Caco-2 (cell line): ENCODE measurements at regions of chr14 and their contacts with region 1.

Region 1: GRCh38 chr14:22375321-22375930 is 213.6 kb downstream of the DAD1 start:
- DNase-seq: peak in 1 of 2 experiments; percentile 60
- H3K4me3 ChIP-seq: no peak overlapping the region
- H3K4me3 Mint-ChIP-seq: no peak overlapping the region
- H3K27ac Mint-ChIP-seq: no peak overlapping the region
- H3K4me1 ChIP-seq: peaks cover 42% of the 10 kb centered on the region
- H3K4me1 Mint-ChIP-seq: peaks cover 23% of the 10 kb centered on the region
- H3K27me3 ChIP-seq: no peaks in the 10 kb centered on the region
- H3K27me3 Mint-ChIP-seq: no peaks in the 10 kb centered on the region
- CTCF ChIP-seq: peak; percentile 53 to 65

Region 2: GRCh38 chr14:22163051-22163450 is 212.4 kb before region 1 on chr14:
- CTCF ChIA-PET with region 1: interaction called, 4 read pairs
- POLR2A ChIA-PET with region 1: no interaction called
- intact Hi-C with region 1: loop called (anchors 5 kb)
- DNase-seq: no peak
- H3K4me3 ChIP-seq: no peak overlapping the region
- H3K4me3 Mint-ChIP-seq: no peak overlapping the region
- H3K27ac Mint-ChIP-seq: no peak overlapping the region
- H3K4me1 ChIP-seq: peaks cover 8% of the 10 kb centered on the region; the same call in 1 of the 2 replicates
- H3K4me1 Mint-ChIP-seq: no peaks in the 10 kb centered on the region
- H3K27me3 ChIP-seq: no peaks in the 10 kb centered on the region
- H3K27me3 Mint-ChIP-seq: no peaks in the 10 kb centered on the region
- CTCF ChIP-seq: peak; percentile 21 to 35

Region 3: GRCh38 chr14:22276913-22277816 is 98.3 kb before region 1 on chr14:
- CTCF ChIA-PET with region 1: interaction called, 5 read pairs
- POLR2A ChIA-PET with region 1: no interaction called
- intact Hi-C with region 1: loop called (anchors 1 kb)
- DNase-seq: peak in 1 of 2 experiments; percentile 37
- H3K4me3 ChIP-seq: no peak overlapping the region
- H3K4me3 Mint-ChIP-seq: no peak overlapping the region
- H3K27ac Mint-ChIP-seq: no peak overlapping the region
- H3K4me1 ChIP-seq: peaks cover under 1% of the 10 kb centered on the region; the same call in 1 of the 2 replicates
- H3K4me1 Mint-ChIP-seq: peaks cover under 1% of the 10 kb centered on the region
- H3K27me3 ChIP-seq: no peaks in the 10 kb centered on the region
- H3K27me3 Mint-ChIP-seq: no peaks in the 10 kb centered on the region
- CTCF ChIP-seq: peak; percentile 60 to 66

Region 4: GRCh38 chr14:22319526-22320361 is 55.7 kb before region 1 on chr14:
- CTCF ChIA-PET with region 1: interaction called, 37 read pairs
- POLR2A ChIA-PET with region 1: no interaction called
- intact Hi-C with region 1: loop called (anchors 1 kb)
- DNase-seq: peak; percentile 67 to 72
- H3K4me3 ChIP-seq: no peak overlapping the region
- H3K4me3 Mint-ChIP-seq: no peak overlapping the region
- H3K27ac Mint-ChIP-seq: peak overlapping the region; percentile 34
- H3K4me1 ChIP-seq: peaks cover 14% of the 10 kb centered on the region; the same call in 1 of the 2 replicates
- H3K4me1 Mint-ChIP-seq: peaks cover 22% of the 10 kb centered on the region
- H3K27me3 ChIP-seq: no peaks in the 10 kb centered on the region
- H3K27me3 Mint-ChIP-seq: no peaks in the 10 kb centered on the region
- CTCF ChIP-seq: peak; percentile 61 to 69

Region 5: GRCh38 chr14:22358726-22359125 is 16.7 kb before region 1 on chr14:
- CTCF ChIA-PET with region 1: no interaction called
- POLR2A ChIA-PET with region 1: no interaction called
- intact Hi-C with region 1: no loop called
- DNase-seq: no peak
- H3K4me3 ChIP-seq: no peak overlapping the region
- H3K4me3 Mint-ChIP-seq: no peak overlapping the region
- H3K27ac Mint-ChIP-seq: no peak overlapping the region
- H3K4me1 ChIP-seq: no peaks in the 10 kb centered on the region
- H3K4me1 Mint-ChIP-seq: no peaks in the 10 kb centered on the region
- H3K27me3 ChIP-seq: no peaks in the 10 kb centered on the region
- H3K27me3 Mint-ChIP-seq: no peaks in the 10 kb centered on the region
- CTCF ChIP-seq: no peak

Region 6: DNA sequence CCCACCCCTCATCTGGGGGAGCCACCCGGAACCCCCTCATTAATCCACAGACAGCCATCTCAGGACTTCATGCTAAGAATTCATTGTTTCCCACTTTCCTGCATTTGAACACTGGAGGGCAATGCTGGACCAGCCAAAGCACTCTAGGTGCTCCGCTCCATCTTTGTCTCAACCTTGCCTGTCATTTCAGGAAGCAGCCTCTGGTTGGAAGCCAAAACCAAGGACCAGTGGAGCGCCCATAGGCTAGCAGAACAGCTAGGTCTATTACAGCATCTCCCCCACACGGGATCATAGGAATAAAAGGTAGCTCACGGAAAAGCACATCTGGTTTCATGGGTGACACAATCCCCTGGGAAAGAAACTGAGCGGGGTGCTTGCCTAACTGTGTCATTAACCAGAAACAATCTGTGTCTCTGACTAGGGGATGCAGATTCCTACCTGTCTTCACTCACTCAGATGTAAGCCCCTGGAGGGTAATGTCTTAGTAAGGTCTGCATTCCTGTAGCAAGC is 16.5 kb after region 1 on chr14:
- CTCF ChIA-PET with region 1: no interaction called
- POLR2A ChIA-PET with region 1: no interaction called
- intact Hi-C with region 1: no loop called
- DNase-seq: peak; percentile 56 to 64
- H3K4me3 ChIP-seq: no peak overlapping the region
- H3K4me3 Mint-ChIP-seq: no peak overlapping the region
- H3K27ac Mint-ChIP-seq: peak overlapping the region; percentile 34
- H3K4me1 ChIP-seq: peaks cover 25% of the 10 kb centered on the region
- H3K4me1 Mint-ChIP-seq: peaks cover 20% of the 10 kb centered on the region
- H3K27me3 ChIP-seq: no peaks in the 10 kb centered on the region
- H3K27me3 Mint-ChIP-seq: no peaks in the 10 kb centered on the region
- CTCF ChIP-seq: peak; percentile 68 to 71